ENCODE measurements at regions of chr11 and their contacts with region 1.

Region 1: GRCh38 chr11:59560702-59561469 is 49.5 kb downstream of the OR4D9 start:
- DNase-seq: peak; percentile 55 to 67 (median 57)
- H3K4me3 ChIP-seq: peak overlapping the region; percentile 80 to 87 (median 86)
- H3K4me3 Mint-ChIP-seq: peak overlapping the region; percentile 85 to 98
- H3K27ac ChIP-seq: peak overlapping the region in 1 of 2 donors; percentile 5
- H3K27ac Mint-ChIP-seq: peak overlapping the region in 6 of 7 donors; percentile 56 to 87 (median 71)
- H3K4me1 ChIP-seq: peaks cover 40 to 52% of the 10 kb centered on the region in 2 donors
- H3K4me1 Mint-ChIP-seq: peaks cover 51% of the 10 kb centered on the region
- H3K27me3 ChIP-seq: peaks cover 16 to 29% of the 10 kb centered on the region in 2 donors
- H3K27me3 Mint-ChIP-seq: peaks cover 29 to 37% (median 33%) of the 10 kb centered on the region in 3 donors
- CTCF ChIP-seq: no peak

Region 2: DNA sequence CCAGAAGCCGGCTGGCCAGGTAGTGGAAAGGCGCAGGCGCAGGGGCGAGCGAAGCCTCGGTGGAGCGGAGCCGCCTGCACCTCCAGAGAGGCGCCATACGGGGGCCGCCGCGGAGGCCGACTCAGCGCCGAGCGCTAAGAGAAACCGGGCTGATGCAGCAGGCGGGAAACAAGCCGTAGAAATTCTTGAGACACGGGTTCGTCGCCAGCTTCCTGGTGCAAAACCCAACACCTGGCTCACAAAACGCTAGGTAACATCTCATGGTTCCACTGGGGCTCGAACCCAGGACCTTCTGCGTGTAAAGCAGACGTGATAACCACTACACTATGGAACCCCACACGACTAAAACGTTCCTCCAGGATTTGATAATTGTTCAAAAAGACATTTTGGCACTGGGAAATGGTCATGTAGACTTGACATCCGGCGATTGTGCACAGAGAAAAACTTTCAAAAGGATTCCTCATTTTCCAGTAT is 10.5 kb before region 1 on chr11:
- intact Hi-C with region 1: loop called in 1 of 2 experiments (anchors 2 kb)
- DNase-seq: peak; percentile 56 to 69 (median 66)
- H3K4me3 ChIP-seq: peak overlapping the region; percentile 48 to 83 (median 55)
- H3K4me3 Mint-ChIP-seq: peak overlapping the region; percentile 86 to 90
- H3K27ac ChIP-seq: peak overlapping the region in 1 of 2 donors; percentile 34
- H3K27ac Mint-ChIP-seq: peak overlapping the region in 5 of 7 donors; percentile 19 to 79 (median 59)
- H3K4me1 ChIP-seq: peaks cover 27 to 33% of the 10 kb centered on the region in 2 donors
- H3K4me1 Mint-ChIP-seq: peaks cover 39% of the 10 kb centered on the region
- H3K27me3 ChIP-seq: peaks cover 3 to 7% of the 10 kb centered on the region in 2 donors
- H3K27me3 Mint-ChIP-seq: peaks cover 13 to 17% (median 16%) of the 10 kb centered on the region in 3 donors
- CTCF ChIP-seq: peak; percentile 57

Measured in CD14-positive monocyte (primary cell).